Prostate gland (tissue), 2 donors: ENCODE measurements at regions of chr12 and their contacts with region 1.

Region 1: GRCh38 chr12:111643427-111643826 is 42.3 kb downstream of the BRAP start:
- DNase-seq: peak; percentile 70
- H3K4me3 ChIP-seq: no peak overlapping the region
- H3K27ac ChIP-seq: peak overlapping the region; percentile 45 to 67
- H3K4me1 ChIP-seq: peaks cover 6% of the 10 kb centered on the region
- H3K27me3 ChIP-seq: no peaks in the 10 kb centered on the region
- CTCF ChIP-seq: no peak
- POLR2A ChIP-seq: no peak

Region 2: GRCh38 chr12:111149299-111149698 is 494.1 kb before region 1 on chr12:
- intact Hi-C with region 1: no loop called
- DNase-seq: no peak
- H3K4me3 ChIP-seq: no peak overlapping the region
- H3K27ac ChIP-seq: no peak overlapping the region
- H3K4me1 ChIP-seq: no peaks in the 10 kb centered on the region
- H3K27me3 ChIP-seq: no peaks in the 10 kb centered on the region
- CTCF ChIP-seq: no peak
- POLR2A ChIP-seq: no peak

Region 3: DNA sequence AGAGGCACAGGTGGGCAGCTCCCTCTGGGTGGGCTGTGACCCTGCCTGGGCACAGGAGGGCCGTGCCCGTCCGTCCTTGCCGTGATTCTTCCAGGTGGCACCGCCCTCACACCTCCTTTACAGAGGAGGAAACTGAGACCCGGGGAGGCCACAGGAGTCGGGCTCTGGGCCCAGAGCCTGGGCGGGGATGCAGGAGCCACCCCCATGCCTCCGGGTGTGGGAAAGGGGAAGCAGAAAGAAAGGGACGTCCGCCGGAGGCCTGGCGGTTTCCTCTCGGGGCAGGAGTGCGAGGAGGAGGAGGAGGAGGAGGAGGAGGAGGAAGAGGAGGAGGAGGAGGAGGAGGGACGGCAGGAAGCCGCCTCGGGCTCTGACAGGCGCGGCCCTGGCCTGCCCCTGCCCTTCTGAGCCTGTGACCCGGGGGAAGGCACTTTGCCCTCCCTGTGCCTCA is 214.7 kb before region 1 on chr12:
- intact Hi-C with region 1: no loop called
- DNase-seq: no peak
- H3K4me3 ChIP-seq: no peak overlapping the region
- H3K27ac ChIP-seq: no peak overlapping the region
- H3K4me1 ChIP-seq: no peaks in the 10 kb centered on the region
- H3K27me3 ChIP-seq: no peaks in the 10 kb centered on the region
- CTCF ChIP-seq: no peak
- POLR2A ChIP-seq: no peak

Region 4: DNA sequence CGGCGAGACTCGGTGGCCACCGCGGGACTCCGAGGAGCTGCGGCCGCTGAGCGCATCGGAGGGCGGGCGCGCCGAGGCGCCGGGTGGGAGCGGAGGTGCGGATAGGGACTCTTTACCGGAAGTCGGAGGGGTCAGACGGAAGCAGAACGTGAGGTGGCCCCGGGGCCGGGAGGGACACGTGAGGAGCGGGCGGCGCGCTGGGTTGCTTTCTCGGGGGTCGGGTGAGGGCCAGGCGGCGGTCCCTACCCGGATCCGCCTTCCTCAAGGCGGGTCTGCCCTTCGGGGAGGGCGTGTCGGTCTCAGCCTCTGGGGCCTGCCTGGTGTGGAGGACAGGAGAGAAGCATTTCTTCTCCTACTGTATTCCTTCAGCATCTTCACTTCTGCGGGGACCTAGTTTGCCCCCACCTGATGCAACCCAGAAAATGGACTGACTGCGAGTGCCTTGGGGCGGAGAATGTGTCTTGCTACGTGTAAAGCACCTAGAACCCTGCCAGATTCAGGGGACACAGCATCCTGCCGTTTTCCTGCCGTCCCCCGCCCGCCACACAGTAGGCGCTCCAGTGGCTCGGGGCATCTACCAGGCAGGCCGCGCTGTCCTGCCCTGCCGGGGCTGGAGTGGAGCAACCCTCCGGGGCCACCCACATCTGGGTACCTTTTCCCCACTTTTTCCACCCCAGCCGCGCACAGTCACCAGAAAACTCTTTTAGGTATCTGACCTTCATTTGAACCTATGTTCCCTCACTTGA is 43.8 kb before region 1 on chr12:
- intact Hi-C with region 1: loop called (anchors 5 kb)
- DNase-seq: peak; percentile 81
- H3K4me3 ChIP-seq: peak overlapping the region; percentile 91 to 97
- H3K27ac ChIP-seq: peak overlapping the region; percentile 92 to 98
- H3K4me1 ChIP-seq: no peaks in the 10 kb centered on the region
- H3K27me3 ChIP-seq: no peaks in the 10 kb centered on the region
- CTCF ChIP-seq: no peak
- POLR2A ChIP-seq: peak; percentile 55

Region 5: DNA sequence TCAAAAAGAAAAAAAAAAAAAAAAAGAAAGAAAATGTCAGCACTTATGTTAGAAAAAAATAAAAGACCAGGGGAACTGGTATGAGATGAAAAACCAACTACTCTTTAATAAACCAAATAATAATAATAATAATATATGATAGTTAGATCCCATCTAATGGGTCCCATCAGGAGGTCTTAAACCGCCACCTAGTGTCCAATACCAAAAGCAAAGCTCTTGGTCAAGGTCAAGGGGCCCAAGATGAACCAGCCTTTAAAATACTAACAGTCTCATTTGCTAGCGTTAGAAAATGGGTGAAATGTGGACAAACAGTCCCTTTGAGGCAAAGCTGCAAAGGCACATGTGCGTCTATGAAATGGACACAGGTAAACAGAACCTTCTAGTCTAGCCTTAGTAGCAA is 30.1 kb after region 1 on chr12:
- intact Hi-C with region 1: no loop called
- DNase-seq: no peak
- H3K4me3 ChIP-seq: no peak overlapping the region
- H3K27ac ChIP-seq: no peak overlapping the region
- H3K4me1 ChIP-seq: no peaks in the 10 kb centered on the region
- H3K27me3 ChIP-seq: no peaks in the 10 kb centered on the region
- CTCF ChIP-seq: peak in 1 of 4 experiments; percentile 21
- POLR2A ChIP-seq: no peak

Region 6: GRCh38 chr12:111705672-111706071 is 62.2 kb after region 1 on chr12:
- intact Hi-C with region 1: no loop called
- DNase-seq: no peak
- H3K4me3 ChIP-seq: no peak overlapping the region
- H3K27ac ChIP-seq: no peak overlapping the region
- H3K4me1 ChIP-seq: no peaks in the 10 kb centered on the region
- H3K27me3 ChIP-seq: no peaks in the 10 kb centered on the region
- CTCF ChIP-seq: no peak
- POLR2A ChIP-seq: no peak